A549 (cell line): ENCODE measurements at regions of chr16 and their contacts with region 1.

Region 1: DNA sequence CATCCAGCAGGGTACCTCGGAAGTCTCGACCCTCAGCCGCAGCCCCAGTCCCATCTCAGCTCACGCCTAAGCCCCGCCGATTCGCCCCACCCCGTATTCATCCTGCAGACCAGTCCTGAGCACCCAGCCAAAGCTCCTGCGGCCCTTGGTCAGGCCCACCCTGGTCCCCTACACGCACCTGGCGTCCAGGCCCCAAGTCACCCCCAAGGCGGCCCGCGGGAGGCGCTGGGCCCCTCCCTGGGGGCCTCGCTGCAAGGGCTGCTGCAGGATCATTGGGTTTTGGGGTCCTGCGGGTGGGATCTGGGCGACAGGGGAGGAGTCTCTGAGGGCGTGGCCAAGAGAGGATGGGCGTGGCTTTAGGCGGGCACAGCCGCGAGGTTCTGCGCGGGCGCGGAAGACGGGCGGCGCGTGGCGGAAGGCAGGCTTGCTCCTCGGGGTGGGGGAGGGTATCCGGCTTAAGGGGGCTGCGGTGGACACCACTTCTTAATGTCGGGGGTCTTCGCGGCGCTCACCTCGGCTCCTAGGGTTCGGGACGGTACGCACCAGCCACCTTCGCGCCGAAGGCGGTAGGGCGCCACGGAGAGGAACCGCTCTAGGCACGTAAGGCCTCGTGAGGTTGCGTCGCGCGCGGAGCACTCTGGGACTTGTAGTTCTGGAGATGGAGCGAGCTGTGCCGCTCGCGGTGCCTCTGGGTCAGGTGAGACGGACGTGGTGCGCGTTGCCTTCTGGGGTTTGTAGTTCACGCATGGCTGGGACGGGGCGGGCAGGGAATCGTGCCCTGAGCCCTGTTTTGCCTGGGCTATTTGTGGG is at the starts of genes HCFC1R1 and THOC6:
- DNase-seq: peak; percentile 83 to 99
- ATAC-seq: peak; percentile 17 to 63
- H3K4me3 ChIP-seq: peak within 1 kb of the TSS; percentile 93
- H3K27ac ChIP-seq: peak within 1 kb of the TSS; percentile 98 to 100
- H3K4me1 ChIP-seq: peaks cover 34% of the 10 kb centered on the region
- CTCF ChIP-seq: no peak
- EP300 ChIP-seq: 0 out of 5 replicates have a peak, but pooled peaks of 1 of the 2 experiments have one; percentile 16
- POLR2A ChIP-seq: peak; percentile 69
- RAD21 ChIP-seq: no peak
- polyA plus RNA-seq, gene HCFC1R1: 46.4 and 60.3 TPM in 2 replicates
- polyA plus RNA-seq, gene THOC6: 31.8 and 32.5 TPM in 2 replicates

Region 2: DNA sequence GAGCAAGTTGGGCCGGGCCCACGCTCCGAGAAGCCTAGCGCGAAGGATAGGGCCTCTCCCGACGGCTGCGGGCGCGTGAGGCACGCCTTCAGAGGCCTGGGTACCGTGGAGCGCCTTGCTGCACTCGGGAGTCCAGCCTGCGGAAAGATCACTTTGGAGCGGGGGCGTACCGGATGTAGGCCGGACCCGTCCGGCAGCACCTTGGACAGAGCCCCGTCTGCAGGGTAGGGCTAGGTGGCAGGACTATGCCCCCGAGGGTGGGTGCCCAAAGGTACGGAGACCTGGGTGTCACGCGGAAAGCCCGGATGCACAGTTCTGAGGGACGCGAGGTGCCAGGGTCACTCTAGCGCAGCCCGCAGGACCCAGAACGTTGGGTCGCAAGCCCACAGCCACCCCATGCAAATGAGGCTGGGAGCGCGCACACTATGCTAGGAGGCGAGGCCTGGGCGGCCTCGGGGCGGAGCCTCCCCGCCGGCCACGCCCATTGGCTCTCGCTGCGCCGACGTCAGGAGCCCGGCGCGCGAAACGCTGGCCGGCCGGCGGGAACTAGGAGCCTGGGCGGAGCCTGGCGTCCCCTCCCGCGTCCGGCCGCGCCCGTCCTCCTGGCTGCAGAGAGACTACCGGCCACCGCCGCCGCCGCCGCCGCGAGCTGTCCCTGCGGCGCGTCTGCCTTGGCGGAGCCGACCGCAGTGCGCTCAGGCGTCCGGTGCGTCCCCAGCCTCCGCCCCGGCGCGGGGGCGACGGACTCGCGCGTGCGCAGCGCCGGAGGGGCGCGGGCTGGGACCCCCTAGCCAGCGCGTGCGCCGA is 54.9 kb before region 1 on chr16 and contains the start of gene PAQR4:
- CTCF ChIA-PET with region 1: interaction called, 4 read pairs
- POLR2A ChIA-PET with region 1: interaction called, 12 read pairs
- DNase-seq: peak; percentile 84 to 91
- ATAC-seq: peak; percentile 68 to 74
- H3K4me3 ChIP-seq: peak within 1 kb of the TSS; percentile 97
- H3K27ac ChIP-seq: peak within 1 kb of the TSS; percentile 84 to 91
- H3K4me1 ChIP-seq: peaks cover 17% of the 10 kb centered on the region
- CTCF ChIP-seq: no peak
- EP300 ChIP-seq: no peak
- POLR2A ChIP-seq: no peak; the same call in 1 of the 2 replicates
- RAD21 ChIP-seq: no peak
- polyA plus RNA-seq, gene PAQR4: 8.0 and 9.0 TPM in 2 replicates

Region 3: DNA sequence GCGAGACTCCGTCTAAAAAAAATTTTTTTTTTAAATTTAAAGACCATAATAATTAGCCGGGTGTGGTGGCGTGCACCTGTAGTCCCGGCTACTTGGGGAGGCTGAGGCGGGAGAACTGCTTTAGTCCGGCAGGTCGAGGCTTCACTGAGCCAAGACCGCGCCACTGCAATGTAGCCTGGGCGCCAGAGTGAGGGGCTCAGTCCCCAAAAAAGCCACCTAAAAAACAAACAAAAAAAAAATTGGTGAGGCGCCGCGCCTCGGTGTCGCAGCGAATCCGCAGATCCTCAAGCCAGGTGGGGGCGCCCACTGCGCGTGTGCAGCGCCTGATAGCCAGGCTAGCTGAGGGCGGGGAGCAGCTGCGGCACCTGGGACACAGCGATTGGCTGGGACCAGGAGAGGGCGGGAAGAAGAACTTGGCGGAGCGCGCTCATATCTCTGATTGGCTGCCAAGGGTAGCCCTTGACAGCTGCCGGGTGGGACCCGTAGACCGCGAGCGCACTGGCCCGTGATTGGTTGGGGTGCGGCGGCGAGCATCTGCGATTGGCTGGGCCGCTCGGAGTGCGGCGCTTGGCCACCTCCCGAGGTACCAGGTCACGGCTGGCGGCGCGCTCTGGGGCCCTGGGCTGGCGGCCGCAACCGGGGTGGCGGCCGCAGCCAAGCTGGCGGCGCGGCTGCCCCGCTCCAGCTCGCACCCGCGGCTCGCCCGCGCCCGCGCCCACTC is 20.1 kb before region 1 on chr16:
- CTCF ChIA-PET with region 1: interaction called, 214 read pairs
- POLR2A ChIA-PET with region 1: interaction called, 107 read pairs
- DNase-seq: peak; percentile 99 to 100
- ATAC-seq: peak; percentile 96 to 98
- H3K4me3 ChIP-seq: peak overlapping the region; percentile 65
- H3K27ac ChIP-seq: peak overlapping the region; percentile 76 to 87; a peak in 5 of 6 replicates
- H3K4me1 ChIP-seq: peaks cover 15% of the 10 kb centered on the region; the same call in 2 of the 3 replicates
- CTCF ChIP-seq: peak; percentile 71
- EP300 ChIP-seq: no peak
- POLR2A ChIP-seq: 0 out of 2 replicates have a peak, but pooled peaks have one; percentile 26
- RAD21 ChIP-seq: peak; percentile 74 to 85

Region 4: GRCh38 chr16:3012828-3013420 is 10.9 kb before region 1 on chr16 and contains the start of gene CLDN9:
- CTCF ChIA-PET with region 1: interaction called, 214 read pairs
- POLR2A ChIA-PET with region 1: interaction called, 107 read pairs
- DNase-seq: no peak
- ATAC-seq: peak; percentile 22 to 51; a peak in 5 of 6 replicates
- H3K4me3 ChIP-seq: no peak within 1 kb of the TSS
- H3K27ac ChIP-seq: peak within 1 kb of the TSS in 1 of 2 experiments; percentile 58; a peak in 3 of 6 replicates
- H3K4me1 ChIP-seq: peaks cover 15% of the 10 kb centered on the region
- CTCF ChIP-seq: no peak
- EP300 ChIP-seq: no peak
- POLR2A ChIP-seq: no peak
- RAD21 ChIP-seq: no peak
- polyA plus RNA-seq, gene CLDN9: 0.03 and 0.12 TPM in 2 replicates

Region 5: DNA sequence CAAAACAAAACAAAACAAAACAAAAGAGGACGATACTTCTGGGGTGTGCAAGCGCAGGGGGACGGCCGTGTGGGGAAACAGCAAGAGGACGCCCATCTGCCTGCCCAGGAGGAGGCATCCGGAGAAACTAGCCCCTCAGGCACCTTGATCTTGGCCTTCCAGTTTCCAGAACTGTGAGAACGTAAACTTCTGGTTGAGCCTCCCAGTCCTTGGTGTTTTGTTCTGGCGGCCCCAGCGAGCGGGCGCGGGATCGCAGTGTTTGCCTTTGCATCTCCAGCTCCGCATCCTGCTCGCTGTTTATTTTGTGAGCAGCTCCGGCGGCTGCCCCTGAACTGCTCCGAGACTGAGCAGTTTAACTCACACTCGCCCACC is 21.5 kb after region 1 on chr16:
- CTCF ChIA-PET with region 1: interaction called, 178 read pairs
- POLR2A ChIA-PET with region 1: interaction called, 10 read pairs
- DNase-seq: no peak
- ATAC-seq: peak; percentile 58 to 68
- H3K4me3 ChIP-seq: peak overlapping the region; percentile 75
- H3K27ac ChIP-seq: peak overlapping the region; percentile 75 to 84
- H3K4me1 ChIP-seq: peaks cover 3% of the 10 kb centered on the region; the same call in 1 of the 3 replicates
- CTCF ChIP-seq: no peak
- EP300 ChIP-seq: no peak
- POLR2A ChIP-seq: no peak
- RAD21 ChIP-seq: no peak